CD4-positive, alpha-beta memory T cell (primary cell): ENCODE measurements at regions of chr6 and their contacts with region 1.

Region 1: DNA sequence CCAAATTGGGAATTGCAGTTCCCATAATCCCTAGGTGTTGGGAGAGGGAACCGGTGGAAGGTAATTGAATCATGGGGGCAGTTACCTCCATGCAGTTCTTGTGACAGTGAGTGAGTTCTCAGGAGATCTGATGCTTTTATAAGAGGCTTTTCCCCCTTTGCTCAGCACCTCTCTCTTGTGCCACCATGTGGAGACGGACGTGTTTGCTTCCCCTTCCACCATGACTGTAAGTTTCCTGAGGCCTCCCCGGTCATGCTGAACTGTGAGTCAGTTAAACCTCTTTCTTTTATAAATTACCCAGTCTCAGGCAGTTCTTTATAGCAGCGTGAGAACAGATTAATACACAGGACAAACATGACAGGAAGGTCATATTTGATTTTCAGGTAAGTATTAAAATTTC is 25.3 kb upstream of the HECA start:
- DNase-seq: peak in 4 of 5 donors; percentile 11 to 30 (median 21)
- H3K4me3 ChIP-seq: no peak overlapping the region
- H3K4me3 Mint-ChIP-seq: peak overlapping the region in 2 of 8 donors; percentile 13 to 39
- H3K27ac ChIP-seq: no peak overlapping the region
- H3K27ac Mint-ChIP-seq: peak overlapping the region; percentile 3 to 87 (median 44)
- H3K4me1 ChIP-seq: peaks cover 50% of the 10 kb centered on the region
- H3K4me1 Mint-ChIP-seq: peaks cover 38 to 59% (median 51%) of the 10 kb centered on the region in 4 donors
- H3K27me3 ChIP-seq: no peaks in the 10 kb centered on the region
- H3K27me3 Mint-ChIP-seq: no peaks in the 10 kb centered on the region

Region 2: DNA sequence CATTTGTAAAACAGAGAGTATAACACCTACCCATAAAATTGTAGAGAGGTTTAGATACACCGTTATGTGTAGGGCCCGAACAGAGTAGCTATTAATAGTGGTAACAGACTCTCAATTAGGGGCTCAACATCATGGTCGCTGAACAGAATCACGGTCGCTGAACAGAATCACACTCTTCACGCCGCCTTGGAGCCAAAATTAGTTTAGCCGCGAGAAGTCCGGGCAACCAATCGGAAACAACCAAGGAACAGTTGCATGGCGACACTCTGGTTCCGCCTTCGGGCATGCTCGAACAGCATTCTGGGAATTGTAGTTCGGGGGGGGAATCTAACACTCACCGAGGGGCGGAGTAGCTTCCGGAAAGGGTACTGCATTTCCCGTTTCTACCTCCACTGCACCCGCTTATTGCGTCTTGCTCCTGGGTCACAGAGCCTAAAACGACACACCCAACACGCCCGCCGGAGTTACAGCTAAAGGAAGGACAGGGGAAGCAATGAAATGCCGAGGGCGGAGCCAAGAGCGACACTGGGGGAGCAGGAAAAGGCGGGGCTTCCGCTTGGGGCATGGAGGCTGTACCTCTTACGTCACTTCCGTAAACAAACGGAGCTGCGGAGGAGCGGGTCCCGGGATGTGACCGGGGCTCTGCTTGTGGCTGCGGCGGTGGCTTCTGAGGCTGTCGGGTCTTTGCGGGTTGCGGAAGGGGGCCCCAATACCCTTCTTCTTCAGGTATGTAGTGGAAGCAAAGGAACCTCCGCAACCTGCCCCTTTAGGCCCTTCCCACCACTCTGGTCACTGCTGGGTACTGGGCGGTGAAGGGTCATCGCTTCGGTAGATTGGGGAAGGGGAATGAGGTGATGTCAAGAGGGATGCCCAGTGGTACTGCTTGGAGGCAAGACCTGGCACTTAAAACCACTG is 336.1 kb before region 1 on chr6 and contains the start of gene CCDC28A:
- CTCF ChIA-PET with region 1: no interaction called
- POLR2A ChIA-PET with region 1: interaction called, 6 read pairs
- intact Hi-C with region 1: loop called (anchors 5 kb)
- DNase-seq: peak; percentile 96 to 98 (median 97)
- H3K4me3 ChIP-seq: peak within 1 kb of the TSS; percentile 72 to 99
- H3K4me3 Mint-ChIP-seq: peak within 1 kb of the TSS; percentile 91 to 100 (median 99)
- H3K27ac ChIP-seq: peak within 1 kb of the TSS; percentile 90
- H3K27ac Mint-ChIP-seq: peak within 1 kb of the TSS; percentile 97 to 100 (median 100)
- H3K4me1 ChIP-seq: peaks cover 18% of the 10 kb centered on the region
- H3K4me1 Mint-ChIP-seq: peaks cover 12 to 46% (median 26%) of the 10 kb centered on the region in 4 donors
- H3K27me3 ChIP-seq: no peaks in the 10 kb centered on the region
- H3K27me3 Mint-ChIP-seq: peaks cover 0 to 3% of the 10 kb centered on the region in 2 donors
- total RNA-seq, gene CCDC28A: 32.4 to 33.9 TPM

Region 3: GRCh38 chr6:138817822-138818308 is 291.7 kb before region 1 on chr6:
- CTCF ChIA-PET with region 1: interaction called, 3 read pairs
- POLR2A ChIA-PET with region 1: no interaction called
- intact Hi-C with region 1: loop called (anchors 5 kb)
- DNase-seq: no peak
- H3K4me3 ChIP-seq: no peak overlapping the region
- H3K4me3 Mint-ChIP-seq: no peak overlapping the region
- H3K27ac ChIP-seq: no peak overlapping the region
- H3K27ac Mint-ChIP-seq: peak overlapping the region in 1 of 7 donors; percentile 55
- H3K4me1 ChIP-seq: no peaks in the 10 kb centered on the region
- H3K4me1 Mint-ChIP-seq: peaks cover 3 to 10% (median 7%) of the 10 kb centered on the region in 4 donors
- H3K27me3 ChIP-seq: no peaks in the 10 kb centered on the region
- H3K27me3 Mint-ChIP-seq: peaks cover 0 to 2% of the 10 kb centered on the region in 2 donors

Region 4: GRCh38 chr6:138996524-138996923 is 113.0 kb before region 1 on chr6:
- CTCF ChIA-PET with region 1: no interaction called
- POLR2A ChIA-PET with region 1: no interaction called
- intact Hi-C with region 1: no loop called
- DNase-seq: no peak
- H3K4me3 ChIP-seq: no peak overlapping the region
- H3K4me3 Mint-ChIP-seq: no peak overlapping the region
- H3K27ac ChIP-seq: no peak overlapping the region
- H3K27ac Mint-ChIP-seq: no peak overlapping the region
- H3K4me1 ChIP-seq: no peaks in the 10 kb centered on the region
- H3K4me1 Mint-ChIP-seq: no peaks in the 10 kb centered on the region
- H3K27me3 ChIP-seq: no peaks in the 10 kb centered on the region
- H3K27me3 Mint-ChIP-seq: no peaks in the 10 kb centered on the region

Region 5: GRCh38 chr6:139028658-139029469 is 80.7 kb before region 1 on chr6 and contains the start of gene ABRACL:
- CTCF ChIA-PET with region 1: interaction called, 4 read pairs
- POLR2A ChIA-PET with region 1: interaction called, 36 read pairs
- intact Hi-C with region 1: loop called (anchors 1 kb)
- DNase-seq: peak; percentile 74 to 88 (median 75)
- H3K4me3 ChIP-seq: peak within 1 kb of the TSS; percentile 59 to 97
- H3K4me3 Mint-ChIP-seq: peak within 1 kb of the TSS in 5 of 8 donors; percentile 93 to 98 (median 95)
- H3K27ac ChIP-seq: peak within 1 kb of the TSS; percentile 88
- H3K27ac Mint-ChIP-seq: peak within 1 kb of the TSS; percentile 88 to 98 (median 92)
- H3K4me1 ChIP-seq: peaks cover 46% of the 10 kb centered on the region
- H3K4me1 Mint-ChIP-seq: peaks cover 22 to 34% (median 28%) of the 10 kb centered on the region in 4 donors
- H3K27me3 ChIP-seq: no peaks in the 10 kb centered on the region
- H3K27me3 Mint-ChIP-seq: no peaks in the 10 kb centered on the region
- total RNA-seq, gene ABRACL: 103 to 112 TPM

Region 6: GRCh38 chr6:139146317-139146726 is 36.8 kb after region 1 on chr6:
- CTCF ChIA-PET with region 1: no interaction called
- POLR2A ChIA-PET with region 1: interaction called, 22 read pairs
- intact Hi-C with region 1: no loop called
- DNase-seq: no peak
- H3K4me3 ChIP-seq: peak overlapping the region; percentile 39 to 40
- H3K4me3 Mint-ChIP-seq: peak overlapping the region; percentile 66 to 90 (median 82)
- H3K27ac ChIP-seq: peak overlapping the region; percentile 50
- H3K27ac Mint-ChIP-seq: peak overlapping the region; percentile 69 to 92 (median 86)
- H3K4me1 ChIP-seq: peaks cover 97% of the 10 kb centered on the region
- H3K4me1 Mint-ChIP-seq: peaks cover 80 to 94% (median 87%) of the 10 kb centered on the region in 4 donors
- H3K27me3 ChIP-seq: no peaks in the 10 kb centered on the region
- H3K27me3 Mint-ChIP-seq: no peaks in the 10 kb centered on the region

Region 7: GRCh38 chr6:139161817-139162284 is 52.3 kb after region 1 on chr6:
- CTCF ChIA-PET with region 1: interaction called, 3 read pairs
- POLR2A ChIA-PET with region 1: interaction called, 25 read pairs
- intact Hi-C with region 1: loop called (anchors 1 kb)
- DNase-seq: peak; percentile 62 to 87 (median 69)
- H3K4me3 ChIP-seq: peak overlapping the region in 1 of 2 donors; percentile 12
- H3K4me3 Mint-ChIP-seq: peak overlapping the region; percentile 76 to 91 (median 83)
- H3K27ac ChIP-seq: peak overlapping the region; percentile 56
- H3K27ac Mint-ChIP-seq: peak overlapping the region; percentile 86 to 98 (median 95)
- H3K4me1 ChIP-seq: peaks cover 100% of the 10 kb centered on the region
- H3K4me1 Mint-ChIP-seq: peaks cover 73 to 97% (median 85%) of the 10 kb centered on the region in 4 donors
- H3K27me3 ChIP-seq: no peaks in the 10 kb centered on the region
- H3K27me3 Mint-ChIP-seq: no peaks in the 10 kb centered on the region

Region 8: GRCh38 chr6:140970485-140970884 is 1860.9 kb after region 1 on chr6:
- CTCF ChIA-PET with region 1: no interaction called
- POLR2A ChIA-PET with region 1: no interaction called
- intact Hi-C with region 1: no loop called
- DNase-seq: no peak
- H3K4me3 ChIP-seq: no peak overlapping the region
- H3K4me3 Mint-ChIP-seq: no peak overlapping the region
- H3K27ac ChIP-seq: no peak overlapping the region
- H3K27ac Mint-ChIP-seq: no peak overlapping the region
- H3K4me1 ChIP-seq: no peaks in the 10 kb centered on the region
- H3K4me1 Mint-ChIP-seq: no peaks in the 10 kb centered on the region
- H3K27me3 ChIP-seq: no peaks in the 10 kb centered on the region
- H3K27me3 Mint-ChIP-seq: peaks cover 2 to 3% of the 10 kb centered on the region in 2 donors